Naive thymus-derived CD4-positive, alpha-beta T cell (primary cell): ENCODE measurements at regions of chr18 and their contacts with region 1.

Region 1: DNA sequence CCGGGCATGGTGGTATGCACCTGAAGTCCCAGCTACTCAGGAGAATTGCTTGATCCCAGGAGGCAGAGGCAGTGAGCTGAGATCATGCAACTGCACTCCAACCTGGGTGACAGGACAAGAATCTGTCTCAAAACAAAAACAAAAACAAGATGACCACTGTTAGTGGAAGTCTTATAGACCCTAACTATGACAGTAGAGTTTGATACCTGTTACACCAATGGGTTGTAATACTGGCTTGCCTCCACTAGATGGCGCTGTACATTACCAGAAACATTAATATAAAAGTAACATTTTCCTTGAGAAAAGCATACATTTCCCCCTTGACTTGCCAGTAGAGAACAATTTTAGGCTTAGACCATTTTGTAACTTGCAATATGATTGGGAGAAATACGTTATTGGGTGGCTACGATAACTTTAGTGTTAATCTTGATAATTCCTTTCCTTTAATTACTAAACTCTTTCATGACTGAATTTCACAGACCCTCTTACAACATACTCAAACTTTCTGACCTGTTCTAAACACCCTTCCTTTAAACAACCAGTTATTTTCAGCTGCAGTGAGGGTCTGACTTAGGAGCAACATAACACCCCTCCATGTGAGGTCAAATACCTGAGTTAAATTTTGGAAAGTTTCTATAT is 19.5 kb downstream of the SLC25A52 start:
- DNase-seq: peak in 7 of 9 donors; percentile 12 to 56 (median 46)
- ATAC-seq: peak; percentile 82
- H3K4me3 ChIP-seq: no peak overlapping the region
- H3K4me3 Mint-ChIP-seq: no peak overlapping the region
- H3K27ac ChIP-seq: no peak overlapping the region
- H3K27ac Mint-ChIP-seq: peak overlapping the region in 1 of 9 donors; percentile 14
- H3K4me1 ChIP-seq: no peaks in the 10 kb centered on the region
- H3K4me1 Mint-ChIP-seq: no peaks in the 10 kb centered on the region
- H3K27me3 ChIP-seq: no peaks in the 10 kb centered on the region
- H3K27me3 Mint-ChIP-seq: no peaks in the 10 kb centered on the region

Region 2: DNA sequence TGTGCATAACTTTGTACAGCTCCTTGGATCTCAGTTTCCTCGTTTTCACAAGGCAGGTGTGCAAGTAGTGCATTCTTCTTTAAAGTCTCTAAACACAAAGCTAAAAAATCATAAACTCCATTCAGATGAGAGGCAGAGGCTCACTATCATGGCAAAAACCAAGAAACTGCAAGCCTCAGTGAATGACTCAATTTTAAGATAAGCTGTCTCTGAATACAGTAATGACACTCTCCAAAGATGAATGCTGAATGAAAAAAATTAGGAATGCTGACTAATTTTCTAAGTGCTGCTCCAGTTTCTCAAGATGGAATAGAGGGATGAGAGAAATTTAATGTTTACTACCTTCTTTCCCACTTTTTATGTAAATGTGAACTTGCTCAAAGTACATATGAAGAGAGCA is 74.0 kb before region 1 on chr18:
- CTCF ChIA-PET with region 1: no interaction called
- POLR2A ChIA-PET with region 1: no interaction called
- intact Hi-C with region 1: no loop called
- DNase-seq: no peak
- ATAC-seq: no peak
- H3K4me3 ChIP-seq: no peak overlapping the region
- H3K4me3 Mint-ChIP-seq: no peak overlapping the region
- H3K27ac ChIP-seq: no peak overlapping the region
- H3K27ac Mint-ChIP-seq: no peak overlapping the region
- H3K4me1 ChIP-seq: no peaks in the 10 kb centered on the region
- H3K4me1 Mint-ChIP-seq: no peaks in the 10 kb centered on the region
- H3K27me3 ChIP-seq: no peaks in the 10 kb centered on the region
- H3K27me3 Mint-ChIP-seq: peaks cover 0 to 10% (median 9%) of the 10 kb centered on the region in 5 donors

Region 3: GRCh38 chr18:31801078-31801477 is 59.9 kb after region 1 on chr18:
- CTCF ChIA-PET with region 1: no interaction called
- POLR2A ChIA-PET with region 1: no interaction called
- intact Hi-C with region 1: no loop called
- DNase-seq: no peak
- ATAC-seq: no peak
- H3K4me3 ChIP-seq: no peak overlapping the region
- H3K4me3 Mint-ChIP-seq: no peak overlapping the region
- H3K27ac ChIP-seq: no peak overlapping the region
- H3K27ac Mint-ChIP-seq: no peak overlapping the region
- H3K4me1 ChIP-seq: no peaks in the 10 kb centered on the region
- H3K4me1 Mint-ChIP-seq: no peaks in the 10 kb centered on the region
- H3K27me3 ChIP-seq: no peaks in the 10 kb centered on the region
- H3K27me3 Mint-ChIP-seq: no peaks in the 10 kb centered on the region

Region 4: DNA sequence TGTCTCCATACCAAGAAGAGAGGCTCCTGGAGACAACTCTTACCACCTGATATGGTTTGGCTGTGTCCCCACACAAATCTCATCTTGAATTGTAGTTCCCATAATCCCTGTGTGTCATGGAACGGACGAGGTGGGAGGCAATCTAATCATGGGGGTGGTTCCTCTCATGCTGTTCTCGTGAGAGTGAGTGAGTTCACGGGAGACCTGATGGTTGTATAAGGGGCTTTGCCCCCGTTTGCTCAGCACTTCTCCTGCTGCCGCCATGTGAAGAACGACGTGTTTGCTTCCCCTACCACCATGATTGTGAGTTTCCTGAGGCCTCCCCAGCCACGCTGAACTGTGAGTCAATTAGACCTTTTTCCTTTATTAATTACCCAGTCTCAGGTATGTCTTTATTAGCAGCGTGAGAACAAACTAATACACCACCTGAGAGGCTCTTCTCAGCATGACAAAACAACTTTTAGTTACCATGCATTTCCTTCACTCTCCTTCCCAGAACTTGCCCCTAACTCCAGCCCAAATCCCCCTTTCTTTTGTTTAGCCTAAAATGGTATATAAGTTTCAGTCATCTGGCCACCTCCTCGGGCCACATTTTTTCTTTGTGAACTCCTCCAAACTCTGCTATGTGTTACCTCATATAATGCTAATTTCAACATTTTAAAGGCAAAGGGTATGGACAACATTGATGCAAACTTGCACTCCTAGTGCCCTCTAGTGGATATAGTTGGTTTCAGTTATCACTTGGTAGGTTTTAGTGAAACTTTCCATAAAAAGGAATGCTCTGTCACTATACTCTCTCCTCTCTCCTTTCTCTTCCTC is 78.1 kb after region 1 on chr18:
- CTCF ChIA-PET with region 1: no interaction called
- POLR2A ChIA-PET with region 1: no interaction called
- intact Hi-C with region 1: loop called (anchors 1 kb)
- DNase-seq: peak in 5 of 9 donors; percentile 8 to 27 (median 14)
- ATAC-seq: peak; percentile 75
- H3K4me3 ChIP-seq: no peak overlapping the region
- H3K4me3 Mint-ChIP-seq: no peak overlapping the region
- H3K27ac ChIP-seq: no peak overlapping the region
- H3K27ac Mint-ChIP-seq: no peak overlapping the region
- H3K4me1 ChIP-seq: no peaks in the 10 kb centered on the region
- H3K4me1 Mint-ChIP-seq: peaks cover 0 to 3% (median 0%) of the 10 kb centered on the region in 7 donors
- H3K27me3 ChIP-seq: no peaks in the 10 kb centered on the region
- H3K27me3 Mint-ChIP-seq: peaks cover 0 to 8% (median 5%) of the 10 kb centered on the region in 5 donors

Region 5: GRCh38 chr18:31977270-31977872 is 236.2 kb after region 1 on chr18:
- CTCF ChIA-PET with region 1: no interaction called
- POLR2A ChIA-PET with region 1: no interaction called
- intact Hi-C with region 1: loop called (anchors 1 to 5 kb)
- DNase-seq: peak in 6 of 9 donors; percentile 12 to 40 (median 29)
- ATAC-seq: peak; percentile 63
- H3K4me3 ChIP-seq: no peak overlapping the region
- H3K4me3 Mint-ChIP-seq: no peak overlapping the region
- H3K27ac ChIP-seq: no peak overlapping the region
- H3K27ac Mint-ChIP-seq: no peak overlapping the region
- H3K4me1 ChIP-seq: no peaks in the 10 kb centered on the region
- H3K4me1 Mint-ChIP-seq: peaks cover 0 to 2% (median 0%) of the 10 kb centered on the region in 7 donors
- H3K27me3 ChIP-seq: no peaks in the 10 kb centered on the region
- H3K27me3 Mint-ChIP-seq: peaks cover 0 to 2% (median 0%) of the 10 kb centered on the region in 5 donors